ENCODE measurements at regions of chr3 and their contacts with region 1.

Region 1: DNA sequence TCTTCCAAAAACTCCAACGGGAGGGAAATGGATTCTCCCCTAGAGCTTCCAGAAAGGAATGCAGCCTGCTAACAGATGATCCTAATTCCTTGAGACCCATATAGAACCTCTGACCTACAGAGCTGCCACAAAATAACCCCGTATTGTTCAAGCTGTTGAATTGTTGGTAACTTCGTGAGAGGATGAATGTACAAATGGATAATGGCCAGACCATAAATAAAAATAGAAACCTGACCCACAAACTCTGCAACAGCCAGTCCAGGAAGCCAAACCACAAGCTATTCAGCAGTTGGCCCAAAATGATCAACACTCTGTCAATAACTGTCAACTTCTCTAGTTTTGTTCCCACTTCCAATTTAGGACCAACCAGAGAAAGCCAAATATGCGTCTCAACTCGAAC is 414.0 kb upstream of the ZNF717 start:
- DNase-seq: no peak
- ATAC-seq: no peak
- H3K4me3 ChIP-seq: no peak overlapping the region
- H3K27ac ChIP-seq: no peak overlapping the region
- H3K4me1 ChIP-seq: no peaks in the 10 kb centered on the region
- H3K27me3 ChIP-seq: 0 out of 2 replicates have a peak, but pooled peaks cover 2% of the 10 kb centered on the region
- CTCF ChIP-seq: no peak
- POLR2A ChIP-seq: no peak
- RAD21 ChIP-seq: no peak

Region 2: GRCh38 chr3:75951941-75952340 is 247.4 kb before region 1 on chr3:
- CTCF ChIA-PET with region 1: no interaction called
- POLR2A ChIA-PET with region 1: no interaction called
- dilution Hi-C with region 1: no loop called
- in situ Hi-C with region 1: no loop called
- intact Hi-C with region 1: no loop called
- DNase-seq: peak; percentile 4
- ATAC-seq: no peak
- H3K4me3 ChIP-seq: no peak overlapping the region
- H3K27ac ChIP-seq: no peak overlapping the region
- H3K4me1 ChIP-seq: no peaks in the 10 kb centered on the region
- H3K27me3 ChIP-seq: no peaks in the 10 kb centered on the region
- CTCF ChIP-seq: no peak
- POLR2A ChIP-seq: no peak
- RAD21 ChIP-seq: no peak

Region 3: GRCh38 chr3:76138921-76139320 is 60.5 kb before region 1 on chr3:
- CTCF ChIA-PET with region 1: no interaction called
- POLR2A ChIA-PET with region 1: no interaction called
- dilution Hi-C with region 1: no loop called
- in situ Hi-C with region 1: no loop called
- intact Hi-C with region 1: no loop called
- DNase-seq: peak; percentile 2
- ATAC-seq: no peak
- H3K4me3 ChIP-seq: no peak overlapping the region
- H3K27ac ChIP-seq: no peak overlapping the region
- H3K4me1 ChIP-seq: no peaks in the 10 kb centered on the region
- H3K27me3 ChIP-seq: no peaks in the 10 kb centered on the region
- CTCF ChIP-seq: no peak
- POLR2A ChIP-seq: no peak
- RAD21 ChIP-seq: no peak

Region 4: DNA sequence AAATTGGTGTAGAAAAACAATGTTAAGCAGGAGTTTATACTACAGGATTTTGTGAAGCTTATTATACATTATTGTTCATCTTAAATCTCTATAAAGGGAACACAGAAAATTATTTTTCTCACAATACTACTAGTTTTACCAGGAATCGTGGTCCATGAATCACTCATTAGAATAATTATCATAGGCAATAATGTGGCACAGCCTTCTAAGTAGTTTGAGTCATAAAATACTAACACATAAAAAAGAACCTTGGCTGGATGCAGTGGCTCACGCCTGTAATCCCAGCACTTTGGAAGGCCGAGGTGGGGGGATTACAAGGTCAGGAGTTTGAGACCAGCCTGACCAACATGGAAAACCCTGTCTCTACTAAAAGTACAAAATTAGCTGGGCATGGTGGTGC is 21.0 kb before region 1 on chr3:
- CTCF ChIA-PET with region 1: interaction called, 15 read pairs
- POLR2A ChIA-PET with region 1: no interaction called
- dilution Hi-C with region 1: no loop called
- in situ Hi-C with region 1: no loop called
- intact Hi-C with region 1: no loop called
- DNase-seq: no peak
- ATAC-seq: no peak
- H3K4me3 ChIP-seq: no peak overlapping the region
- H3K27ac ChIP-seq: no peak overlapping the region
- H3K4me1 ChIP-seq: no peaks in the 10 kb centered on the region
- H3K27me3 ChIP-seq: no peaks in the 10 kb centered on the region
- CTCF ChIP-seq: no peak
- POLR2A ChIP-seq: no peak
- RAD21 ChIP-seq: no peak